CD4-positive, alpha-beta T cell (primary cell): ENCODE measurements at regions of chr6 and their contacts with region 1.

Region 1: GRCh38 chr6:34236131-34236996 is at the start of gene HMGA1:
- DNase-seq: peak; percentile 84 to 96 (median 89)
- ATAC-seq: peak; percentile 71
- H3K4me3 ChIP-seq: peak within 1 kb of the TSS; percentile 90
- H3K4me3 Mint-ChIP-seq: peak within 1 kb of the TSS; percentile 97
- H3K27ac ChIP-seq: peak within 1 kb of the TSS; percentile 97 to 99
- H3K27ac Mint-ChIP-seq: peak within 1 kb of the TSS; percentile 99
- H3K4me1 ChIP-seq: peaks cover 39% of the 10 kb centered on the region
- H3K4me1 Mint-ChIP-seq: peaks cover 35% of the 10 kb centered on the region
- H3K27me3 ChIP-seq: no peaks in the 10 kb centered on the region
- H3K27me3 Mint-ChIP-seq: no peaks in the 10 kb centered on the region
- CTCF ChIP-seq: no peak
- total RNA-seq, gene HMGA1: 102 to 107 TPM

Region 2: GRCh38 chr6:33897184-33897780 is 339.1 kb before region 1 on chr6:
- CTCF ChIA-PET with region 1: no interaction called
- POLR2A ChIA-PET with region 1: no interaction called
- intact Hi-C with region 1: no loop called
- DNase-seq: no peak
- ATAC-seq: no peak
- H3K4me3 ChIP-seq: no peak overlapping the region
- H3K4me3 Mint-ChIP-seq: no peak overlapping the region
- H3K27ac ChIP-seq: no peak overlapping the region
- H3K27ac Mint-ChIP-seq: no peak overlapping the region
- H3K4me1 ChIP-seq: peaks cover 29% of the 10 kb centered on the region
- H3K4me1 Mint-ChIP-seq: peaks cover 41% of the 10 kb centered on the region
- H3K27me3 ChIP-seq: no peaks in the 10 kb centered on the region
- H3K27me3 Mint-ChIP-seq: no peaks in the 10 kb centered on the region
- CTCF ChIP-seq: no peak

Region 3: DNA sequence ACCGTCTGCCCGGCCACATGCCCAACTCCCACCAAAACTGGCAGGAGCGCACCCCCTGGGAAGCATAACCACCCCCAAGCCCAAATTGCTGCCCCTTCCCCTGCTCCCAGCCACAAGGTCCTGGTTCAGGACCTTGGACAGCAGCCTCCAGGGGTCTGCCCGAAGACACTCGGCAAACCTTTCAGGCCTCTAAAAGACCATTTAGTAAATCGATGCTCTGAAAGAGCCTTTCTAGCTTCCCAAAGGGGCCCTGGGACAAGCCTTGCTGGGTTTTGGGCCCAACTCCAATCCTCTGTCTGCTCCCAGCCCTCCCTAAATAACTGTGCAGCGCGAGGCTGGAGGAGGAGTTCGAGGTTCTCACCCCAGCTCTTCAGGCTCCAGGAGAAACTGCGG is 121.0 kb before region 1 on chr6:
- CTCF ChIA-PET with region 1: no interaction called
- POLR2A ChIA-PET with region 1: no interaction called
- intact Hi-C with region 1: no loop called
- DNase-seq: peak in 5 of 14 experiments; percentile 6 to 47 (median 15)
- ATAC-seq: no peak
- H3K4me3 ChIP-seq: no peak overlapping the region
- H3K4me3 Mint-ChIP-seq: no peak overlapping the region
- H3K27ac ChIP-seq: no peak overlapping the region
- H3K27ac Mint-ChIP-seq: no peak overlapping the region
- H3K4me1 ChIP-seq: no peaks in the 10 kb centered on the region
- H3K4me1 Mint-ChIP-seq: no peaks in the 10 kb centered on the region
- H3K27me3 ChIP-seq: peaks cover 8 to 15% of the 10 kb centered on the region in 2 experiments
- H3K27me3 Mint-ChIP-seq: peaks cover 48% of the 10 kb centered on the region
- CTCF ChIP-seq: no peak

Region 4: DNA sequence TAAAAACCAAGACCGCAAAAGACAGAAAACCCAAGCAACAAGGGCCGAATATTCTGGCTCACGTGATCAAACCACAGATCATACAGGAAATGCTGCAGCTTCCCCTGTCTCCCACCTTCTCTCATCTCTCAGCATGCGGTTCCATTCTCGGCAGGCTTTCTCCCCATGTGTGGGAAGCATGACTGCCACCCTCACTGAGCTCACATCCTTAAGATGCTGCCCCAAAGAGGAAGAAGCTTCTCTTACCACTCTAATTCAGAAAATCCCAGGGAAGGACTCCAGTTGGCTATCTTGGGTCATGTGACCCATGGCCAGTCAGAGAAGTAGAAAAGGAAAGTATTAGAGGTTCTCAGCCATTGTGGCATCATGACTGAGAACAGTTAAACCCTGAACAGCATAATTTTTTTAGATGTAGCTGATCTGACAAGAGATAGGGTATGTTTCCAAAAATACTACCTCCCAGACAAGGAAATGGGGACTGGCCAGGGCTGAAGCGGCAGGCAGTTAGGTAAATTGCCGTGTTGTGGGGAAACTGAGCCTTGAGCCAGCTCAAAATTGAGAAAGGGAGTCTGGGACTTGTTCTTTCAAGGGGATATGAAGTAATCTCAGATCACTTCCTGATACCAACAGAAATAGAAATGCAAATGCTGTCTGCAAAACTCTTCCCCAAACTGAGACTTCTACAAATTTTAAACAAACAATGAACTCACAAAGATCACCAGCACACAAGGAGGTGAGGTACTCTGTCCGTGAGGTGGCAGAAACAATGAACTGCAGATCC is 53.4 kb before region 1 on chr6:
- CTCF ChIA-PET with region 1: no interaction called
- POLR2A ChIA-PET with region 1: interaction called, 13 read pairs
- intact Hi-C with region 1: no loop called
- DNase-seq: peak; percentile 43 to 93 (median 63)
- ATAC-seq: peak; percentile 94
- H3K4me3 ChIP-seq: peak overlapping the region; percentile 13
- H3K4me3 Mint-ChIP-seq: peak overlapping the region; percentile 39
- H3K27ac ChIP-seq: peak overlapping the region; percentile 58 to 61
- H3K27ac Mint-ChIP-seq: peak overlapping the region; percentile 74
- H3K4me1 ChIP-seq: peaks cover 39% of the 10 kb centered on the region
- H3K4me1 Mint-ChIP-seq: peaks cover 31% of the 10 kb centered on the region
- H3K27me3 ChIP-seq: no peaks in the 10 kb centered on the region
- H3K27me3 Mint-ChIP-seq: no peaks in the 10 kb centered on the region
- CTCF ChIP-seq: no peak

Region 5: GRCh38 chr6:34223956-34224940 is 12.1 kb before region 1 on chr6:
- CTCF ChIA-PET with region 1: interaction called, 9 read pairs
- POLR2A ChIA-PET with region 1: interaction called, 98 read pairs
- intact Hi-C with region 1: loop called (anchors 1 kb)
- DNase-seq: peak; percentile 87 to 99 (median 93)
- ATAC-seq: peak; percentile 95
- H3K4me3 ChIP-seq: peak overlapping the region; percentile 62
- H3K4me3 Mint-ChIP-seq: peak overlapping the region; percentile 63
- H3K27ac ChIP-seq: peak overlapping the region; percentile 89 to 99
- H3K27ac Mint-ChIP-seq: peak overlapping the region; percentile 75
- H3K4me1 ChIP-seq: peaks cover 20% of the 10 kb centered on the region
- H3K4me1 Mint-ChIP-seq: peaks cover 6% of the 10 kb centered on the region
- H3K27me3 ChIP-seq: no peaks in the 10 kb centered on the region
- H3K27me3 Mint-ChIP-seq: no peaks in the 10 kb centered on the region
- CTCF ChIP-seq: no peak

Region 6: DNA sequence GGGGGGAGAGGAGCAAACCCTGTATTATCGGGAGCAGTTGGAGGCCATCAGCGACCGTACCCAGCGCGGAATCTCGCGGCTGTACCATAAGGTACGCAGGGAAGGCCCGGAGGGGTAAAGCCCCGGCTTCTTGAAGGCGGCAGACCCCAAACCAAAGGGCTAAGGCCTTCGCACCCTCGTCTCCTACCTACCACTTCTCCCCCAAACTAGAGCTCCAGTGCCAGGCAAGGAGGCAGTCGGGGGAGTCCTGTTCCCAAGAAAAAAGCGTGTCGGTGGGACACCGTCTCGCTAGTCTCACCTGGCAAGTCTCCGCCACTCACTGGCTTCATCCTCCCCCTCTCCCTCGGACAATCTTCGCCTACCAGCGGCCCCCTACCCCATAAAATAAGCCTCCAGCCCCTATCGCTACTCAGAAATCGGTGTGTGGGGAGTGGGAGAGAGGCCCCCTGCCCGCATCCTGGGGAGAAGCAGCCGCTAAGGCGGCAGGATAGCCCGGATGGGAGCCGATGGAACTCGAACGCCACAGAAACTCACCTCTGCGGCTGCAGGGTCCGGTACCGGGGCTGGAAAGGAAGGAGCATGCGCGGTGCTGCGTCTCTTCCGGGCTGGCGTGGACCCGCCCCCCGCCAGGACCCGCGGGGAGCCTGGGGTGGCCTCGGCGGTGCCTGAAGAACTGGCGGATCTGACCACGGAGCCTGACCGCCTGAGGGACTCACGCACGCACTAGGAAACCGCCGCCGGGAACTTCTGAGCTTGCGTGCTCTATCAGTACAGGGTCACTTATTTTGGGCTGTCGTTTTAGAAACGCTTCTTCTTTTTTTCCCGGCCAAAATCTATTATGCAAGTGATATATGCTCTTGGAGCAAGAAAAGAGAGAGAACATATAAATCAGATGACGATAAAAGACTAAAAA is 189.4 kb after region 1 on chr6 and contains the start of gene RPS10:
- CTCF ChIA-PET with region 1: no interaction called
- POLR2A ChIA-PET with region 1: interaction called, 13 read pairs
- intact Hi-C with region 1: no loop called
- DNase-seq: peak; percentile 81 to 96 (median 88)
- ATAC-seq: peak; percentile 97
- H3K4me3 ChIP-seq: peak within 1 kb of the TSS; percentile 75
- H3K4me3 Mint-ChIP-seq: peak within 1 kb of the TSS; percentile 99
- H3K27ac ChIP-seq: peak within 1 kb of the TSS; percentile 73 to 74
- H3K27ac Mint-ChIP-seq: peak within 1 kb of the TSS; percentile 97
- H3K4me1 ChIP-seq: peaks cover 37% of the 10 kb centered on the region
- H3K4me1 Mint-ChIP-seq: peaks cover 39% of the 10 kb centered on the region
- H3K27me3 ChIP-seq: no peaks in the 10 kb centered on the region
- H3K27me3 Mint-ChIP-seq: no peaks in the 10 kb centered on the region
- CTCF ChIP-seq: no peak
- total RNA-seq, gene RPS10: 3,088 to 3,122 TPM

Region 7: GRCh38 chr6:34757687-34758274 is 521.4 kb after region 1 on chr6:
- CTCF ChIA-PET with region 1: no interaction called
- POLR2A ChIA-PET with region 1: interaction called, 5 read pairs
- intact Hi-C with region 1: loop called in 1 of 2 experiments (anchors 5 kb)
- DNase-seq: no peak
- ATAC-seq: no peak
- H3K4me3 ChIP-seq: peak overlapping the region; percentile 67
- H3K4me3 Mint-ChIP-seq: no peak overlapping the region
- H3K27ac ChIP-seq: peak overlapping the region; percentile 84 to 88
- H3K27ac Mint-ChIP-seq: no peak overlapping the region
- H3K4me1 ChIP-seq: peaks cover 19% of the 10 kb centered on the region
- H3K4me1 Mint-ChIP-seq: peaks cover 9% of the 10 kb centered on the region
- H3K27me3 ChIP-seq: no peaks in the 10 kb centered on the region
- H3K27me3 Mint-ChIP-seq: no peaks in the 10 kb centered on the region
- CTCF ChIP-seq: no peak